AG04449 (cell line): ENCODE measurements at regions of chr19 and their contacts with region 1.

Region 1: GRCh38 chr19:17086120-17086519 is 10.5 kb downstream of the MYO9B start:
- DNase-seq: no peak
- H3K4me3 ChIP-seq: no peak overlapping the region
- CTCF ChIP-seq: no peak

Region 2: DNA sequence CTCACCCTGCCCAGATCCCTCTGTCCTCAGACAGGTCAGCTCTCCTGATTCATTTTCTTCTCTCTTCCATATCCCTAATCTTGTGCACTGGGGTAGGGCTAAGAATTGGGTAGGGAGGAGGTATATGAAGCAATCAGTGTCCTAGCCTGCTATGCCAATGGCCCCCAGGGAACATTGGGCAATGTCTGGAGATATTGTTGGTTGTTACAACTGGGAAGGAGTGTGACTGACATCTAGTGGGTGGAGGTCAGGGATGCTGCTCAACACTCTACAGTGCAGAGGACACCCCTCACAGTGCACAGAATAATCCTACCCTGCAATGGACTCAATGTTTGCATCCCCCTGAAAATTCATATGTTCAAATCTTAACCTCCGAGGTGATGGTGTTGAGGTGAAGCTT is 117.0 kb before region 1 on chr19:
- CTCF ChIA-PET with region 1: no interaction called
- POLR2A ChIA-PET with region 1: no interaction called
- DNase-seq: no peak
- H3K4me3 ChIP-seq: no peak overlapping the region
- CTCF ChIP-seq: no peak

Region 3: GRCh38 chr19:17075035-17075863 is 10.9 kb before region 1 on chr19 and contains the starts of genes HAUS8 and MYO9B:
- CTCF ChIA-PET with region 1: interaction called, 11 read pairs
- POLR2A ChIA-PET with region 1: interaction called, 5 read pairs
- DNase-seq: peak; percentile 99
- H3K4me3 ChIP-seq: peak within 1 kb of the TSS; percentile 95
- CTCF ChIP-seq: no peak

Region 4: DNA sequence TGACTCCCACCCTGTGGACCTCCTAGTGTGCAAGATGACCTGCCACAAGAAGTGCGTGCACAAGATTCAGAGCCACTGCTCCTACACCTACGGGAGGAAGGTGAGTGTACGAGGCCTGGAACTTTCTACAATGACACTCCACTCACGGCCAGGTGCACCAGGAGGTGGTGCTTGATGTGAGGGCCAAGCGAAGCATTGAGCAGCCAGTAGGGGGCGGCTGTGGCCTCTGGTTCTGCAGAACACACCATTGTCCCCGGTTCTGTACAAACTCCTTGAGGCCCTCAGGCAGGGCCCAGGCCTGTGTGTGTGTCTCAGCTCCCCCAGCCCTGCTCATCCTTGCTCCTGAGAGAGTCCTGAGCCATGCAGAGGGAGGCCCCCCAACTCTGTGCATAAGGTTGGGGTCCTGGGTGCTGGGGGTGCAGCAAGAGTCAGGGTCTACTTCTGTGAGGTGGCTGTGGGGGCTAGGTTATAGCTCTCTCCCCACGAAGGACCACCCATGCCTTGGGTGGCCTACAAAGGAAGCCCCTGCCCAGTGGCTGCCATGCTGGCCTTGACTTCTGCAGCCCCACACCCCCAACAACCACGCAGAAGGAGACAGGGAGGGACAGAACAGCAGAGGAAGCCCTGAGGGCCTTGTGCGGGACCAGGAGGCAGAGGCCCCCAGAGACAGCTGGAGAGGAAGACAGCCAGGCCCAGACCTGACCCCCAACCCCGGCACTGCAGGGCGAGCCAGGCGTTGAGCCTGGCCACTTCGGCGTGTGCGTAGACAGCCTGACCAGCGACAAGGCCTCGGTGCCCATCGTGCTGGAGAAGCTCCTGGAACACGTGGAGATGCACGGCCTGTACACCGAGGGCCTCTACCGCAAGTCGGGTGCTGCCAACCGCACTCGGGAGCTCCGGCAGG is 119.4 kb after region 1 on chr19:
- CTCF ChIA-PET with region 1: no interaction called
- POLR2A ChIA-PET with region 1: no interaction called
- DNase-seq: no peak
- H3K4me3 ChIP-seq: no peak overlapping the region
- CTCF ChIP-seq: peak; percentile 77